CD4-positive, alpha-beta memory T cell (primary cell): ENCODE measurements at regions of chr10 and their contacts with region 1.

Region 1: GRCh38 chr10:14583252-14583651 is 191.4 kb downstream of the FAM107B start:
- DNase-seq: peak; percentile 84 to 94 (median 89)
- H3K4me3 ChIP-seq: peak overlapping the region in 1 of 2 donors; percentile 15
- H3K4me3 Mint-ChIP-seq: peak overlapping the region; percentile 75 to 90 (median 82)
- H3K27ac ChIP-seq: peak overlapping the region; percentile 86
- H3K27ac Mint-ChIP-seq: peak overlapping the region; percentile 96 to 100 (median 98)
- H3K4me1 ChIP-seq: peaks cover 99% of the 10 kb centered on the region
- H3K4me1 Mint-ChIP-seq: peaks cover 76 to 99% (median 88%) of the 10 kb centered on the region in 4 donors
- H3K27me3 ChIP-seq: no peaks in the 10 kb centered on the region
- H3K27me3 Mint-ChIP-seq: no peaks in the 10 kb centered on the region

Region 2: DNA sequence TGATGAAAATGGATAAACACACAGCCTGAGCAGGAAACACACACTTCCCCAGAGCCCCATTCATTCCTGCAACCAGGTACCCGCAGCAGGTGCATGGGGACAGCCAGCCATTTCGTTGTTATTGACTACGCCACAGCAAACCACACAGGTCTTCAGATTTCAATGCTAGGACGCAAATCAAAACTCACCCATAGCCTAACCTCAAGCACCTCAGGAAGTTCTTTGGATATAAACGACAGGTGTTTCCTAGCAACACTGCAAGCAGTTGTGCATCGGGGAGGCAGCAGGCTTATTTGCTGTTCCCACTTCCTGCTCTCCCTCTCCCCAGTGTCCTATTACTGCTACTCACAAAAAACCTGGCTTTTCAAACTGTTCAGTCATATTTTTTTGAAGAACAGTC is 76.1 kb before region 1 on chr10:
- CTCF ChIA-PET with region 1: no interaction called
- POLR2A ChIA-PET with region 1: interaction called, 3 read pairs
- intact Hi-C with region 1: loop called (anchors 1 kb)
- DNase-seq: peak; percentile 80 to 89 (median 85)
- H3K4me3 ChIP-seq: no peak overlapping the region
- H3K4me3 Mint-ChIP-seq: peak overlapping the region; percentile 26 to 75 (median 67)
- H3K27ac ChIP-seq: peak overlapping the region; percentile 56
- H3K27ac Mint-ChIP-seq: peak overlapping the region; percentile 89 to 99 (median 96)
- H3K4me1 ChIP-seq: peaks cover 39% of the 10 kb centered on the region
- H3K4me1 Mint-ChIP-seq: peaks cover 37 to 40% (median 38%) of the 10 kb centered on the region in 4 donors
- H3K27me3 ChIP-seq: no peaks in the 10 kb centered on the region
- H3K27me3 Mint-ChIP-seq: no peaks in the 10 kb centered on the region

Region 3: DNA sequence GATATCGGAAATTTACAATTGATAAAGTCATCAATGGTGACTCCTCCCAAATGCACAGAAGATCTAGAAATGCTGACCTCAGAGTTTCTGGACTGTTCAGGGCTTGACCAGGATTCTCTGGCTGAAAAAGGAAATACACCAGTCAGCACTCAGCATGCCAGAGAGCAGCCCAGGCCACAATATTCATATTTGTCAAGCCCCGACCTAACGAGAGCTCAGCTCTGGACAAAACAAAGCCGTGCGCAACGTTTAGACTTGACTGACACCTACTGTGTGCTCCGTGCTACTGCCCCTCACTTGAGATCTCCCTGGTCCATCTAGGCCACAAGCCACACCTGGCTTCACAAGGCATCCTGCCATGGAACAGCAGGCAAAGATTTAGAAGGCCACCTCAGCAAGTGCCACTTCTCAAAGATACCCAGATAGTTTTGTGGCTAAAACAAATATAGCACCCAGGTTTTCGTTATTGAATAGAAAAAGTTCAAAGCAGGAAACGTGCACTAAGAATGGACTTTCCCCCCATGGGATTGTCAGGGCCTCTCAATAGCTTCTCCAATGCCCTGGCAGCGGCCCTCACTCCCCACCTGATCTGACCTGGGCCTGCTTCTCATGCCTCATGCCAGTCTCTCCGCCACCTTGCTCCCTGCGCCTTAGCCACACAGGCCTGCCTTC is 26.8 kb before region 1 on chr10:
- CTCF ChIA-PET with region 1: interaction called, 5 read pairs
- POLR2A ChIA-PET with region 1: interaction called, 640 read pairs
- intact Hi-C with region 1: loop called (anchors 1 kb)
- DNase-seq: peak in 4 of 5 donors; percentile 34 to 64 (median 47)
- H3K4me3 ChIP-seq: no peak overlapping the region
- H3K4me3 Mint-ChIP-seq: peak overlapping the region; percentile 53 to 87 (median 75)
- H3K27ac ChIP-seq: peak overlapping the region; percentile 65
- H3K27ac Mint-ChIP-seq: peak overlapping the region; percentile 93 to 97 (median 94)
- H3K4me1 ChIP-seq: peaks cover 100% of the 10 kb centered on the region
- H3K4me1 Mint-ChIP-seq: peaks cover 80 to 99% (median 89%) of the 10 kb centered on the region in 4 donors
- H3K27me3 ChIP-seq: no peaks in the 10 kb centered on the region
- H3K27me3 Mint-ChIP-seq: no peaks in the 10 kb centered on the region

Region 4: GRCh38 chr10:14571866-14572507 is 11.3 kb before region 1 on chr10:
- CTCF ChIA-PET with region 1: interaction called, 26 read pairs
- POLR2A ChIA-PET with region 1: interaction called, 640 read pairs
- intact Hi-C with region 1: loop called (anchors 1 kb)
- DNase-seq: peak; percentile 86 to 91 (median 89)
- H3K4me3 ChIP-seq: peak overlapping the region; percentile 70 to 75
- H3K4me3 Mint-ChIP-seq: peak overlapping the region; percentile 90 to 98 (median 94)
- H3K27ac ChIP-seq: peak overlapping the region; percentile 82
- H3K27ac Mint-ChIP-seq: peak overlapping the region; percentile 94 to 100 (median 97)
- H3K4me1 ChIP-seq: peaks cover 93% of the 10 kb centered on the region
- H3K4me1 Mint-ChIP-seq: peaks cover 58 to 97% (median 79%) of the 10 kb centered on the region in 4 donors
- H3K27me3 ChIP-seq: no peaks in the 10 kb centered on the region
- H3K27me3 Mint-ChIP-seq: no peaks in the 10 kb centered on the region

Region 5: DNA sequence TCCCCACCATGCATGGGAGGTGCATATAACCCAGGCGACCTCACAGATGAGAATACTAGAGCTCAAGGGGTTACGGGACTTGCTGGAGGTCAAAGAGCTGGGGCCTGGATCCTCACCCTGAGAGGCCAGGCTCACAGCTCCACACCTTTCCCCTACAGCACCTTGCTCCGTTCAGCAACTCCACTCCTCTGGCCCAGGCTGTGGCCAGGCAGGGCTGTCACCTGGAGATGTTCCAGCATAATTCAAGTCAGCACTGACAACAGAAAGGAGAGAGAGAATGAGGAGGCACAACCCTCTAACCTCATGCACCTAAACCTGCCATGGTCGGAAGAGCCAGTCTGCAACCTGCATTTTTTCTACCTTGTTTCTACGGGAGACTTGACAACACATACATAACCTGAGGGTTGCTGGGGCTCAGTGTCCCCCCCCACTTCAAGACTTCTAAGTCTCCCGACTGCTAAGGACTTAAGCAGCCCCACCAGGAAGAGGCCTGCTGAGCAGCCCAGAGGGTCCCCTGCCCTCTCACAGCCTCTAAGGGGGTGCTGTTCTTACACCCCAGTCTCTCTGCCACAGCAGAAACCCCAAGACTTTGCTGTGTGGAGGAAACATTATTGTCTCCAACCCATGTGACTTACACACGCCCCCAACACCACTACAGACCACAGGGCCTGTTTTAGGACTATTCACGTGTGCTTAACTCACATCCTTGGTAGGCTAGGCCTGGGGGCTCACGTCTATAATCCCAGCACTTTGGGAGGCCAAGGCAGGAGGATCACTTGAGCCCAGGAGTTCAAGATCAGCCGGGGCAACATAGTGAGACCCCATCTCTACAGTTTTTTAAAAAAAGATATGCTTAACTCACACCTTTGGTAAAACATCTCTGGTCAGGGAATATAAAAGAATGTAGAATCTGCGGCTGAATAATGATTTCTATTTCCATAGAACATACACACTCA is 15.8 kb after region 1 on chr10:
- CTCF ChIA-PET with region 1: interaction called, 14 read pairs
- POLR2A ChIA-PET with region 1: interaction called, 37 read pairs
- intact Hi-C with region 1: loop called (anchors 1 kb)
- DNase-seq: peak in 1 of 5 donors; percentile 41
- H3K4me3 ChIP-seq: no peak overlapping the region
- H3K4me3 Mint-ChIP-seq: peak overlapping the region in 2 of 8 donors; percentile 35 to 62
- H3K27ac ChIP-seq: no peak overlapping the region
- H3K27ac Mint-ChIP-seq: peak overlapping the region; percentile 61 to 94 (median 89)
- H3K4me1 ChIP-seq: peaks cover 79% of the 10 kb centered on the region
- H3K4me1 Mint-ChIP-seq: peaks cover 63 to 92% (median 80%) of the 10 kb centered on the region in 4 donors
- H3K27me3 ChIP-seq: no peaks in the 10 kb centered on the region
- H3K27me3 Mint-ChIP-seq: no peaks in the 10 kb centered on the region